Colonic mucosa (tissue), 4 donors: ENCODE measurements at regions of chr15 and their contacts with region 1.

Region 1: DNA sequence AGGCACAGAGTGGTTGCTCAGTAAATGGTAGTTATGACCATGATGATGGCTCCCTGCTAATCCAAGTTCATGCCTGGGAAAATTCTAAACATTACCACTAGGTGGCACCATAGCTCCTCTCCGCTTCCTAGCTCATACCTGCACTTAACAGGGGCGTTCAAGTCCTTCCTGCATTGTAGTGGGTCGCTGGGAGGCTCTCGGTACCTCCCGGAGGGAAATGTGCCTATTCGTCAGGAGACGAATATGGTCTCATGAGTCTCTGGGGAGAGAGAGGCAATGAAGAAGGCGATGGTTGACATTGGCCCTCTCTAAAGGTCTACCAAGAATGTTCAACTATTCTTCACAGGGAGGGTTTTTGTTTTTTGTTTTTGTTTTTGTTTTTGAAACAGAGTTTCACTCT is 10.9 kb downstream of the MESP1 start:
- DNase-seq: peak; percentile 77
- H3K4me3 ChIP-seq: no peak overlapping the region
- H3K27ac ChIP-seq: no peak overlapping the region
- H3K4me1 ChIP-seq: no peaks in the 10 kb centered on the region
- H3K27me3 ChIP-seq: no peaks in the 10 kb centered on the region
- CTCF ChIP-seq: peak; percentile 94

Region 2: GRCh38 chr15:90059208-90059985 is 319.3 kb after region 1 on chr15:
- intact Hi-C with region 1: no loop called
- DNase-seq: peak; percentile 83
- H3K4me3 ChIP-seq: no peak overlapping the region
- H3K27ac ChIP-seq: peak overlapping the region; percentile 83
- H3K4me1 ChIP-seq: peaks cover 44% of the 10 kb centered on the region
- H3K27me3 ChIP-seq: no peaks in the 10 kb centered on the region
- CTCF ChIP-seq: no peak

Region 3: DNA sequence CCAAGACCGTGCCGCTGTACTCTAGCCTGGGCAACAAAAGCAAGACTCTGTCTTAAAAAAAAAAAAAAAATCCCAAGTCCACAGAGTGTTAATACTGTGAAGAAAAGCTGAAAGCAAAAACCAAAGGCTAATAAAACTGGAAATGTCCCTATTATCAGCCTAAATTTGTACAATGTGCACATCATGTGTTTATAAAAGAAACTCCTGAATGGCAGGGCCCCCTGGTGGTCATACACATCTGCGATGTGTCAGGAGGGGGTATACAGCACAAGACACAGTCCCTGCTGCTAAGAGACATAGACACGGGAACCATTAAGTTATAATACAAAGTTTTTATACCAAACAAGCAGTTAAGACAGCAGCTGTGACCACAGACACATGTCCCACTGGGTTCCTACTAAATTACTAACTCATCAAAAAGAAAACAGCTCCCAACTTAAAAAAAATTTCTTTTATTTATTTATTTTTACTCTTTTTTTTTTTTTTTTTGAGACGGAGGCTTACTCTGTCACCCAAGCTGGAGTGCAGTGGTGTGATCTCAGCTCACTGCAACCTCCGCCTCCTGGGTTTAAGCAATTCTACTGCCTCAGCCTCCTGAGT is 331.2 kb after region 1 on chr15:
- intact Hi-C with region 1: loop called (anchors 10 kb)
- DNase-seq: peak; percentile 90
- H3K4me3 ChIP-seq: no peak overlapping the region
- H3K27ac ChIP-seq: no peak overlapping the region
- H3K4me1 ChIP-seq: no peaks in the 10 kb centered on the region
- H3K27me3 ChIP-seq: no peaks in the 10 kb centered on the region
- CTCF ChIP-seq: peak; percentile 65